Adrenal gland (tissue), 19 donors: ENCODE measurements at regions of chr6 and their contacts with region 1.

Region 1: DNA sequence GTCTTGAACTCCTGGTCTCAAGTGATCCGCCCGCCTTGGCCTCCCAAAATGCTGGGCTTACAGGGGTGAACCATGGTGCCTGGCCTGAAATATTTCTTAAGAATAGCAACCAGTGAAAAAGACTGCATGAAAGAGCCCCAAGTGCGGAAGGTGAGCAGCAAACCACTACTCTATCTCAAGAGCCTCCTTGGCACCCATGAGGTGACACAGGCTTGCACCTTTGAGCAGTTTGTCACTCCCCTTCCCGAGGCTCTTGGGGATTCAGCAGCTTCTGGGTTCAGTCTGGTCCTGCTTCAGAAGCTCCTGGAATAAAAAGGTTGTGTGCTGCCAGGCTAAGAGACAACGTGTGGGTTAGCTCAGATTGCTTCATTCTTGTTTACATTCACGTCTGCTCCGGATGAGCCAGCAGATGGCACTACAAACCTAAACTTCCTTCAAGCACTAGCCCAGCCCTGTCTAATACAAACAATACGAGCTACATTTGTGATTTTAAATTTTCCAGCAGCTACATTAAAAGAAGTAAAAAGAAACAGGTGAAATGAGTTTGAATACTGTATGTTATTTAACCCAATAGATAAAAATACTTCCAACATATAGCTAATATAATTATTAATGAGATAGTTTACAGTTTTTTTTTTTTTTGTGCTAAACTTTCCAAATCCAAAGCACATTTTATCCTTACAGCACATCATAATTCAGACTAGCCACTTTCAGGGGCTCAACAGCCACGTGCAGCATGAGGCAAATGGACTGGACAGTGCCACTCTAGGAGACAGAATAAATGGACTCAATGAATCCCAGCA is 46.2 kb downstream of the GJA10 start:
- DNase-seq: peak; percentile 56 to 89 (median 75)
- H3K4me3 ChIP-seq: no peak overlapping the region
- H3K27ac ChIP-seq: no peak overlapping the region
- H3K4me1 ChIP-seq: no peaks in the 10 kb centered on the region
- H3K27me3 ChIP-seq: no peaks in the 10 kb centered on the region
- CTCF ChIP-seq: peak; percentile 30 to 73 (median 68)
- POLR2A ChIP-seq: no peak

Region 2: DNA sequence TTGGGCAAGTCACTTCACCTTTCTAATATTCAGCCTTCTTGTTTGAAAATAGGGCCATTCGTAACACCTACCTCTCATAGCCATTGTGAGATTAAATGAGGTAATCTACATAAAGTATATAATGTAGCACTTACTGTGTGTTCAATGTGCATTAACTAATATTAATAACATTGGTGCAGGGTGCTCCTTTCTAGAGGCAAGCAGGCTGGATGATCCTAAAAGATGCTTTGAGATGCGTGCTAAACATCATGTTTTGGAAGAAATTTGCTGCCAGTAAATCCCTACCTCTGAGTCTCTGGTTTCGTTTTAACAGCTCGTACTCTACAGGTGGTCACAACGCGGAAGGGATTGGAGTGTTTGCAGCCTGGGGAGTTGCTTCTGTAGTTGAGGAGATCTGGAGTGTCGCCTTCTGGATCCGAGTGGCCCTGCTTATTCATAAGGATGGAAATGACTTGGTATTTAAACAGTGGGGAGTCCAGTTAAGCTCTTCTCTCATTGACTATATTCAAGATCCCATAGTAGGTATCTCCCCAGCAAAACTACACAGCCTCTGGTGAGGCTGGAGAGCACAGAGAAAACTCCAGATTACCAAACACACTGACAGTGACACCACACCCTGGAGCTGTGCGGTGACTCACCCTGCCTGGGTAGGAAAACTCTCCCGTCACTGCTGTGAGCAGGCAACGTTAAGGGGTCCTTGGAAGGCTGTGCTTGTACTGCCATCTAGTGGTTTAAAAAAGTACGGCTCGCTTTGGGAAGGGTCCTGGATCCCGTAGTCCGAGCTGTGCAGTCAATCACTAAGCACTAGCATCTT is 538.6 kb after region 1 on chr6:
- intact Hi-C with region 1: loop called (anchors 2 to 10 kb)
- DNase-seq: peak; percentile 89 to 97 (median 95)
- H3K4me3 ChIP-seq: no peak overlapping the region
- H3K27ac ChIP-seq: no peak overlapping the region
- H3K4me1 ChIP-seq: peaks cover 0 to 4% of the 10 kb centered on the region in 2 donors
- H3K27me3 ChIP-seq: no peaks in the 10 kb centered on the region
- CTCF ChIP-seq: peak; percentile 83 to 95 (median 94)
- POLR2A ChIP-seq: no peak